Activated B cell treated with CpG ODN at 0.5 μM for 24 hours (primary cell): ENCODE measurements at regions of chr7 and their contacts with region 1.

Region 1: DNA sequence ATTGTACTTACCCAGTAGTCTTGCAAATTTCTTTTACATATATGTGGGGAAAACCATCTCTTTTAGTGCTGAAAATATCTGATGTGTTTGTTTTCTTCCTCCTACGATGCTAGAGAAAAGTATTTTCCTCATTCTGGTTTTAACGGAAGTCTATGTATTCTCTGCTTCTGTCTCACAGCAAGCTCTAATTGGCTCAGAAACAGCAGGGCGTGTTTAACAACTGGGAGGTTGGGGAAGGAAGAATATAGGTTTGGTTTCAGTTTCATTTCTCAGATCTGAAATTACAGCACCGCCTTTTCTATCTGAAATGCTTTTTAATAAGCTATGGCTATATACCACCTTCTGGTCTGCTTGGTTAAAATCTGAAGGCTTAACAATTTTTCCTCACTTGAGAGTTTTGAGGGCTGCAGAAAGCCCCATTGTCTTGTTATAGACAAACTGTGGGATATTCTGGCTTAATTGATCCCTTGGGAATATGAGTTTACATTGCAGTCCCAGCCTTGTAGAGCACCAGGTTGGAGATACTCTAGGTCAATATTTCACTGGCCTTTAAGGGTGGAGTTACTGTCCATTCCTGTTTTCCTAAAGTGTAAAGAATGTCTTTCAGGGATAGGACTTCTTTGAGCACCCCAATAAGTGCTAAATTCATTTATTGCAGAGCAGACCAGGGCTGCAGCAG is at the start of gene SAMD9:
- DNase-seq: no peak
- ATAC-seq: peak; percentile 99
- H3K4me3 Mint-ChIP-seq: peak within 1 kb of the TSS; percentile 79
- H3K27ac Mint-ChIP-seq: peak within 1 kb of the TSS; percentile 74
- H3K4me1 Mint-ChIP-seq: peaks cover 46% of the 10 kb centered on the region
- H3K27me3 Mint-ChIP-seq: no peaks in the 10 kb centered on the region
- CTCF ChIP-seq: no peak
- total RNA-seq, gene SAMD9: 24.4 and 26.3 TPM in 2 replicates

Region 2: DNA sequence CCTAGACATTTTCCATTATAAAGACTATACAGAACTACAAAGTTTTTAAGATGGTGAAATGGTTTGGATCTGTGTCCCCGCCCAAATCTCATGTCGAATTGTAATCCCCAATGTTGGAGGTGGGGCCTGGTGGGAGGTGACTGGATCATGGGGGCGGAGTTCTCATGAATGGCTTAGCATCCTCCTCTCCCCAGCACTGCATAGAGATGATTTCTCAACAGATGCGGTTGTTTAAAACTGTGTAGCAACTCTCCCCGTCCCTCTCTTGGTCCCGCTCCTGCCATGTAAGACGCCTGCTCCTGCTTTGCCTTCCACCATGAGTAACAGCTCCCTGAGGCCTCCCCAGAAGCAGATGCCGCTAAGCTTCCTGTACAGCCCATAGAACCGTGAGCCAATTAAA is 529.4 kb before region 1 on chr7:
- CTCF ChIA-PET with region 1: no interaction called
- POLR2A ChIA-PET with region 1: no interaction called
- intact Hi-C with region 1: loop called (anchors 1 kb)
- DNase-seq: no peak
- ATAC-seq: no peak
- H3K4me3 Mint-ChIP-seq: peak overlapping the region; percentile 80
- H3K27ac Mint-ChIP-seq: peak overlapping the region; percentile 80
- H3K4me1 Mint-ChIP-seq: peaks cover 59% of the 10 kb centered on the region
- H3K27me3 Mint-ChIP-seq: no peaks in the 10 kb centered on the region
- CTCF ChIP-seq: no peak

Region 3: DNA sequence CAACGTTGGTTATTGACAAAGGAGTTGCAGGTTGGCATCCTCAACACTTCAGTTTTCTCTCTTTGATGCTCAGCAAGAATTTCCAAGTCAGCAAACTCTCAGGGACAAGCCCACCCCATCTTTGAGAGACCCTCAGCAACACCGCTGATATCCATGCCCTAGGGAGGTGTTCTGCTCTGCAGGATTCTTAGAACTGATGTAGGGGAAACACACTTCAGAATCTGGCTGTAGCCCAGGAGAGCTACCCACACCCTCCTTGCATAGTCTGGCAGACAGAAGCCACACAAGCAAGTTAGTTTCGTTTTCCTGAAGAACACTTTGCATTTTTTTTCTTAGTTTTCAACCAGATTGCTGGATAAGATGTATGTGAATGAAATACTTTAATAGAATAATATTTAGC is 29.4 kb after region 1 on chr7:
- CTCF ChIA-PET with region 1: interaction called, 5 read pairs
- POLR2A ChIA-PET with region 1: interaction called, 10 read pairs
- intact Hi-C with region 1: loop called (anchors 1 kb)
- DNase-seq: no peak
- ATAC-seq: peak; percentile 73
- H3K4me3 Mint-ChIP-seq: peak overlapping the region; percentile 90
- H3K27ac Mint-ChIP-seq: peak overlapping the region; percentile 83
- H3K4me1 Mint-ChIP-seq: peaks cover 58% of the 10 kb centered on the region
- H3K27me3 Mint-ChIP-seq: no peaks in the 10 kb centered on the region
- CTCF ChIP-seq: no peak

Region 4: DNA sequence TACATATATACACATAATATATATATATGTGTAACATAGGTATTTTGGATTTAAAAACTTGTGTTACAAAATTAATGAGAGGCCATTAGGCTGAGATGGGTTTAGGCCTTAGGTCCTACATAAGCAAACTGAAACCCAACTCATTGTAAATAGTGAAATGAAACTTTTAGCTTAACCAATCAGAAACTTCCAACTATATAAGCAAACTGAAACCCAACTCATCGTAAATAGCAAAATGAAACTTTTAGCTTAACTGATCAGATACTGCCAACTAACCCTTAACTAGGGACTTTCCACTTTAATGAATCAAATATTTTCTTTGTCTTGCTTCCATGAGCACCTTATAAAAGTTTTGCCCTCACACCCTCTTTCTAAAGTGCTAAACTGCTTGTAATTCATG is 47.5 kb after region 1 on chr7:
- CTCF ChIA-PET with region 1: interaction called, 3 read pairs
- POLR2A ChIA-PET with region 1: interaction called, 8 read pairs
- intact Hi-C with region 1: loop called (anchors 1 kb)
- DNase-seq: no peak
- ATAC-seq: peak; percentile 97
- H3K4me3 Mint-ChIP-seq: peak overlapping the region; percentile 47
- H3K27ac Mint-ChIP-seq: peak overlapping the region; percentile 86
- H3K4me1 Mint-ChIP-seq: peaks cover 23% of the 10 kb centered on the region
- H3K27me3 Mint-ChIP-seq: no peaks in the 10 kb centered on the region
- CTCF ChIP-seq: no peak